Dendritic cell treated with granulocyte-macrophage colony-stimulating factor and Interleukin-4, amounts not matched to agents 40 ng/mL and 50 ng/mL, for 4 days (primary cell): ENCODE measurements at regions of chr11 and their contacts with region 1.

Region 1: DNA sequence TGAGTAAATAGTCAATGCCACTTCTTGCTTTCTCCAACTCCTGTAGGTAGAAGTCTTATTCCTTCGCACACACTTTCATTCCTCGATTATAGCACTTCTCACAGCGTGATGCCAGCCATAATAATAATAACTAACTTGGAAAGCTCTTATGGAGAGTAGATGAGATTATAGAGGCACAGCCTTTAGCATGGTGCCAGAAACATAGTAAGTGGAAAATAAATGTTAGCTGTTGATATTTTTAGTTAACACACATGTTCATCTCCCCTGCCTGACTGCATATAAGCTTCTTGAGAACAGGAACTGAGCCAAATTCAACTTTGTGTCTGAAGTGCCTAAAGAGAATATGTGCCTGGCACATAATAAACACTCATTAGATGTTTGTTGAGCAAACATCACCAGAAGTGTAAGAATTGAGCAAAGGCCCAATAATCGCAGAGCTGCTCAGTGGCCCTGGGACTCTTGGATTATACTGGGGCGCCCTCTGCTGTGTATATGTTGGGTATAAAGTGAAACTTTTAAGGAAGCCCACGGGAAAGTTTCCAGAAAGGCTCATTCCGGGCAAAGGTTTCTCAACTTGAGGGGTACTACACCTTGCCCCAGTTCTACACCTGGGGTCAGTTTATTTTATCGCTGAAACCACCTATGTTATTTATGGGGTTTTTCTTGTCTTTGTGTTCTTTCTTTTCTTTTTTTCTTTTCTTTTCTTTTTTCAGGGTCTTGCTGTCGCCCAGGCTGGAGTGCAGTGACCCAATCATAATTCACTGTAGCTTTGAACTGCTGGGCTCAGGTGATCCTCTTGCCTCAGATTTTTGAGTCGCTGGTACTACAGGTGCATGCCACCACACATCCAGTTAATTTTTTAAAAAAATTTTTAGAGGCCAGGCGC is 22.3 kb downstream of the SLN start:
- H3K4me3 Mint-ChIP-seq: peak overlapping the region; percentile 35
- H3K27ac Mint-ChIP-seq: no peak overlapping the region
- H3K4me1 Mint-ChIP-seq: no peaks in the 10 kb centered on the region
- H3K27me3 Mint-ChIP-seq: peaks cover 9% of the 10 kb centered on the region

Region 2: GRCh38 chr11:107549253-107549953 is 140.2 kb before region 1 on chr11:
- intact Hi-C with region 1: loop called (anchors 1 kb)
- H3K4me3 Mint-ChIP-seq: no peak overlapping the region
- H3K27ac Mint-ChIP-seq: no peak overlapping the region
- H3K4me1 Mint-ChIP-seq: no peaks in the 10 kb centered on the region
- H3K27me3 Mint-ChIP-seq: no peaks in the 10 kb centered on the region

Region 3: DNA sequence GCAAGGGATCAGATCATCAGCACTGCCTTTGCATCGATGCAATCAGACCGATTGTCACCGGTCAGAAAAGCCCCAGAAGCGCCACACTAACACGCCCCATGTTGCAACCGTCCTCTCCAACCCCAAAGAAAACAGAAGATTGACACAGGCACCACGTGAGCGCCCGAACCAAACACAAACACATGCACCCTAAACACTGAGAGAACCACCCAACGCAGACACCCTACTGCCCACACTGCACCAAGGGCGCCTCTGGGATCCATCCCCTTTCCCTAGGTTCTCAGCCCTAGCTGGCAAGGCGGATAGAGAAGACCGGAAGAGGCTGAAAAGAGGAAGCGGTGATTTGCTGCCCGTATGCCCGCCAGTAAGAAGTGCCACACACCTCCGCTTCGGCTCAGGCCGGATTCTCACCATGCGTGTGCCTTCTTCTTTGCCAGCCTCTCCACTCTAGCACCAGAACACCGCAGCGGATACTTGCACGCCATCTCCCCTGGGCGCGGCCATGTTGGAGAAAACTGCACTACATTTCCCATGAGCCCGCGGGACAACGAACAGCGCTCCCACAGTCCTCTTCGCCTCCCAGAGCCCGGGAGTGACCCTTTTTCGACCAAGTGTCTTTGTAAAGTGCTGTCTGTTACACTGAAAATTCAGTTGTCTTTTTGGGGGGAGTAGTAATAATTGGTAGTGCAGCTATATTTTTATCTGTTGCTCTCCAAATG is 124.2 kb before region 1 on chr11 and contains the start of gene ALKBH8:
- intact Hi-C with region 1: loop called (anchors 5 kb)
- H3K4me3 Mint-ChIP-seq: peak within 1 kb of the TSS; percentile 93
- H3K27ac Mint-ChIP-seq: peak within 1 kb of the TSS; percentile 97
- H3K4me1 Mint-ChIP-seq: peaks cover 35% of the 10 kb centered on the region
- H3K27me3 Mint-ChIP-seq: peaks cover 5% of the 10 kb centered on the region

Region 4: GRCh38 chr11:107573438-107573837 is 116.1 kb before region 1 on chr11:
- intact Hi-C with region 1: loop called (anchors 1 kb)
- H3K4me3 Mint-ChIP-seq: no peak overlapping the region
- H3K27ac Mint-ChIP-seq: no peak overlapping the region
- H3K4me1 Mint-ChIP-seq: no peaks in the 10 kb centered on the region
- H3K27me3 Mint-ChIP-seq: peaks cover 15% of the 10 kb centered on the region

Region 5: DNA sequence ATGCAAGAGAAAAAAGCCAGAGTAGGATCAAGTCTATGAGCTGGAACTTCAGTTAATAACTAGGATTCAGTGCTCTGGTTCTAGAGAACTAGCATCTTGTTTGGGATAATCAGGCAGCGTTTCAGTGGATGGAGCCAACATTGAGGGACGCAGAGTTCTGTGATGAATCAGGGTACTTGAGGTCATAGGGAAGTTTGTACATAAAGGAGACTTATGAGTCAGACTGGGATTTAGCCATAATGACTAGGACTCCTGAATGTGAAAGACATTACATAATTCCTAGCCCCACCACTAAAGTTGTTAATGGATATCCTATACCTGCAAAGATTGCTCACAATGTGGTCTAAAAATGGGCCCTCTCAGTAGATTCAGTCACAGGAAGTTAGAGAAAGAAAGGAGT is 15.5 kb after region 1 on chr11:
- intact Hi-C with region 1: no loop called
- H3K4me3 Mint-ChIP-seq: no peak overlapping the region
- H3K27ac Mint-ChIP-seq: no peak overlapping the region
- H3K4me1 Mint-ChIP-seq: no peaks in the 10 kb centered on the region
- H3K27me3 Mint-ChIP-seq: peaks cover 6% of the 10 kb centered on the region

Region 6: DNA sequence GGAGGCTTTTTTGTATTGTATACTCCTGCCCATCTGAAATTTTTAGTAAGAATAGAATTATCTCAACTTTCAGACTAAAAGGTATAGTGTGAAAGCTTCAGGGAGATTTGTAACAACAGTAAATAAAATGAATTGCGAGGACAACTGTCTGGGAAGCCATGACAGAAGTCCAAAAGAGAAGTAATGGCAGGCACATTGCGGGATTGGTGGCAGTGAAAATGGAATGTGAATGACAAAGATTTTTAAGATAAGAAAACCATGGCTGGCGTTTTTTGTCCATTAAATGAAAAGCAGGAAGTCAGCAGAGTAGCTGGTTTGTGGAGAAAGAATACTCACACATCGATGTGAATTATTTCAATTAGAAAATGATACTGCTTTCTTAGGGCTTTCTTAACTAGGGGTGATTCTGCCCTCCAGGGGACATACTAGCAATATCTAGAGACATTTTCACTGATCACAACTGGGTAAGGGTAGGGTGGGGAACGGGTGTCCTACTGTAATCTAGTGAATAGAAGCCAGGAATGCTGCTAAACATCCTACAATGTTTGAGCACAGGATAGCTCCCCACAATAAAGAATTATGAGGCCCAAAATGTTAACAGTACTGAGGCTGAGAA is 531.3 kb after region 1 on chr11:
- intact Hi-C with region 1: no loop called
- H3K4me3 Mint-ChIP-seq: no peak overlapping the region
- H3K27ac Mint-ChIP-seq: no peak overlapping the region
- H3K4me1 Mint-ChIP-seq: peaks cover 46% of the 10 kb centered on the region
- H3K27me3 Mint-ChIP-seq: no peaks in the 10 kb centered on the region